Activated CD4-positive, alpha-beta memory T cell treated with anti-CD3 and anti-CD28 coated beads for 36 hours (primary cell): ENCODE measurements at regions of chr19 and their contacts with region 1.

Region 1: DNA sequence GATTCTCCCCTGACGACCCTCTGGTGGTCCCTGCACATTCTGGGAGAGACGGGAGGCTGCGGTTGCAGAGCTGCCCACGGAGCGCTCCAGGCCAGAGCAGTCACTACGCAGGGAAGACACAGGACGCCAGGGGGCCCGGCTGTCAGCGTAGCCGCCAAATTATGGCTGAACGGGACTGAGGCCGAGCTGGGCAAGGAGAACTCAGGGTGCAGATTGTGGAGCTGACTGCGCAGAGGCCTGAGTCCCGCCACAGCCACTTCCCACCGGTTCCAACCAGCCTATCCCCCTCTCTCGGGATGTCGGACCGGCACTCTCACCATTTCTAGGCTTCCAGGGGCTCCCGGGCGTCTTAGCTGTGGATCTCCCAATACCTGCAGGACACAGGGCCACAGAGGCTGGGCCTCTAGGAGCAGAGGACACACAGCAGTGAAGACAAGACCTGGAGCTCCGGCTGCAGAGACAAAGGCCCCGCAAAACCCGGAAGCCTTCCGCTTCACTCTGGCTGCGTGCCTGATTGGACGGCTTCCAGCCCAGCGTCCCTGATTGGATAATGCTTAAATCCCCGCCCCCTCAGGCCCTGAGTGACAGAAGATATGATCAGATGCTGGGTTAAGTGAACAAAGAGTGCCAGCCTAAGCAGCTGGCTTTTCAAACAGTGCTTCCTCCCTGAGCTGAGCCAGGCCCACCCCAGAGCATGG is at the start of gene ZNF737:
- DNase-seq: peak; percentile 95
- H3K4me3 Mint-ChIP-seq: peak within 1 kb of the TSS; percentile 94
- H3K27ac Mint-ChIP-seq: peak within 1 kb of the TSS; percentile 93
- H3K4me1 Mint-ChIP-seq: peaks cover 11% of the 10 kb centered on the region
- H3K27me3 Mint-ChIP-seq: no peaks in the 10 kb centered on the region
- total RNA-seq, gene ZNF737: 9.0 to 9.9 TPM

Region 2: DNA sequence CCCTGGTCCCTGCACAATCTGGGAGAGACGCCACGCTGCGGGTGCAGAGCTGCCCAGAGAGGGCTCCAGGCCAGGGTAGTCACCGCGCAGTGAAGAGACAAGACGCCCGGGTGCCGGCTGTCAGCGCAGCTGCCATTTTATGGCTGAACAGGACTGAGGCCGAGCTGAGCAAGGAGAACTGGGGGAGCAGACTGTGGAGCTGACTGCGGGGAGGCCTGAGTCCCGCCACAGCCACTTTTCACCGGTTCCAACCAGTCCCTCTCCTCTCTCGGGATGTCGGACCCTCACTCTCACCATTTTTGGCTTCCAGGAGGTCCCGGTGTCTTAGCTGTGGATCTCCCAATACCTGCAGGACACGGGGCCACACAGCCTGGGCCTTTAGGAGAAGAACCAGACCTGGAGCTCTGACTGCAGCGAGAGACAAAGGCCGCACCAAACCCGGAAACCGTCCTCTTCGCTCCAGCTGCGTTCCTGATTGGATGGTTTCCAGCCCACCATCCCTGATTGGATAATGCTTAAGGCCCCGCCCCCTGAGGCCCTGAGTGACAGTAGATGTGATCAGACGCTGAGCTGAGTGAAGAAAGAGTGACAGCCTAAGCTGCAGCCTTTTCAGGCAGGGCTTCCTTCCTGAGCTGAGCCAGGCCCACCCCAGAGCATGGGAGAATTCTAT is 95.8 kb after region 1 on chr19 and contains the start of gene ZNF626:
- CTCF ChIA-PET with region 1: no interaction called
- POLR2A ChIA-PET with region 1: interaction called, 7 read pairs
- intact Hi-C with region 1: loop called (anchors 5 kb)
- DNase-seq: peak; percentile 96
- H3K4me3 Mint-ChIP-seq: peak within 1 kb of the TSS; percentile 91
- H3K27ac Mint-ChIP-seq: peak within 1 kb of the TSS; percentile 90
- H3K4me1 Mint-ChIP-seq: peaks cover 43% of the 10 kb centered on the region
- H3K27me3 Mint-ChIP-seq: no peaks in the 10 kb centered on the region
- total RNA-seq, gene ZNF626: 8.7 to 12.5 TPM

Region 3: GRCh38 chr19:20776083-20777076 is 210.9 kb after region 1 on chr19 and contains the start of gene ZNF66:
- CTCF ChIA-PET with region 1: no interaction called
- POLR2A ChIA-PET with region 1: interaction called, 13 read pairs
- intact Hi-C with region 1: loop called (anchors 1 kb)
- DNase-seq: peak; percentile 97
- H3K4me3 Mint-ChIP-seq: peak within 1 kb of the TSS; percentile 100
- H3K27ac Mint-ChIP-seq: peak within 1 kb of the TSS; percentile 97
- H3K4me1 Mint-ChIP-seq: peaks cover 16% of the 10 kb centered on the region
- H3K27me3 Mint-ChIP-seq: no peaks in the 10 kb centered on the region
- total RNA-seq, gene ZNF66: 5.0 to 6.0 TPM

Region 4: DNA sequence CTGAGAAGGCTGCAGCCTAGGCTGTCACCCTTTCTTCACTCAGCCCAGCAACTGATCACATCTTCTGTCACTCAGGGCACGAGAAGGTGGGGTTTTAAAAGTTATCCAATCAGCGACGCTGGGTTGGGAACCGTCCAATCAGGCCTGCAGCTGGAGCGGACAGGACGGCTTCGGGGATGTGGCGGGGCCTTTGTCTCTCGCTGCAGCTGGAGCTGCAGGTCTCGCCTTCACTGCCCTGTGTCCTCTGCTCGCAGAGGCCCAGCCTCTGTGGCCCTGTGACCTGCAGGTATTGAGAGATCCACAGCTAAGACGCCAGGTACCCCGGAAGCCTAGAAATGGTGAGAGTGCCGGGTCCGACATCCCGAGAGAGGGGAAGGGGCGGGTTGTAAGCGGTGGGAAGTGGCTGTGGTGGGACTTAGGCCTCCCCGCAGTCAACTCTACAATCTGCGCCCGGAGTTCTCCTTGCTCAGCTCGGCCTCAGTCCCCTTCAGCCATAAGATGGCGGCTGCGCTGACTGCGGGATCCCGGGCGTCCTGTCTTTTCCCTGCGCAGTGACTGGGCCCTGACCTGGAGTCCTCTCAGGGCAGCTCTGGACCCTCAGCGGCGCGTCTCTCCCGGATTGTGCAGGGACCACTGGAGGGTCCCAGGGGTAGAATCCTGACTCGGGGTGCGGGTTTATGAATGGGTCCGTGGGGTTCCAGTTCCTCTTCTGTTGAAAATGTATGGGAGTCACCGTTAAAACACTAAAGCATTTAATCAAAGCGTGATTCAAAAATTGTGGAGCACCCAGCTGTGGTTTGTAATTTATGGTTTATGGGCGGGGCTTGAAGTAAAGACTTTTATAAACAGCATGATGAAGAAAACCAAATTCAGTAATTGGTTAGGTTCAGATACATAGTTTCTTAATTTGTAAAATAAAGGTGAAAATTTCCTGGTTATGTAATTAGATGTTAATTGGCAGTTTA is 516.8 kb after region 1 on chr19 and contains the start of gene ZNF714:
- CTCF ChIA-PET with region 1: no interaction called
- POLR2A ChIA-PET with region 1: no interaction called
- intact Hi-C with region 1: loop called (anchors 5 kb)
- DNase-seq: peak; percentile 91
- H3K4me3 Mint-ChIP-seq: peak within 1 kb of the TSS; percentile 100
- H3K27ac Mint-ChIP-seq: peak within 1 kb of the TSS; percentile 94
- H3K4me1 Mint-ChIP-seq: peaks cover 31% of the 10 kb centered on the region
- H3K27me3 Mint-ChIP-seq: no peaks in the 10 kb centered on the region
- total RNA-seq, gene ZNF714: 17.9 to 18.0 TPM